Ovary (tissue), 10 donors: ENCODE measurements at regions of chr15 and their contacts with region 1.

Region 1: GRCh38 chr15:50463423-50464358 is 39.5 kb downstream of the USP8 start:
- DNase-seq: no peak
- H3K4me3 ChIP-seq: no peak overlapping the region
- H3K27ac ChIP-seq: no peak overlapping the region
- H3K4me1 ChIP-seq: no peaks in the 10 kb centered on the region
- H3K27me3 ChIP-seq: no peaks in the 10 kb centered on the region
- CTCF ChIP-seq: no peak
- EP300 ChIP-seq: no peak
- POLR2A ChIP-seq: no peak

Region 2: DNA sequence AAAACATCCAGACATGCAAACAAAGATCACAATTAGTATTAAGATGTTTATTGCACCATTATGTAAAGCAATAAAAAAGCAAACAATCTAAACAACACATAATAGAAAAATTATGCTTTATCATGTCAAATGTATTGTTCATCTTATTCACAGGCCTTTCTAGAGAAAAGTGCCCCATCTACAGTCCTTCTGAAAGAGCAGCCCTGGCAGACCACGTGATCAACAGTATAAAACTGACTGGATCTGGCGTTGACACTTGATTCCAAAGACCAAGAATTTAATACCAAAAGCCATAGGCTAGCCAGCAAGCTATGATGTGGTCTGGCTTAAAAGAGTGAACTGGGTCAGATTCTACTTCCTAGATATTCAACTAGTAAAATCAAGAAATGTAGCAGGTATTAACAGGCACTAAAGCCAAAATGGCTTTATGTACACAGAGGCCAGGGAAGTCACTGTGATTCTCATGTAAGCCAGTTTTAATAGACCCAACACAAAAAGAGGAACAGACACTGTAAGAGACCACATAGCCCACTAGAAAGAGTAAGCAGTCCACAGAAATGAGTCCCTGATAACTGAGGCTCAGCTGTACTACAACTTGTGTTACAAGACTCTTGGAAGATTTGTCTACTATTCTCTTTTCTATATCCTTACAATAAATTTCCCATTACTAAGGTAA is 1126.3 kb after region 1 on chr15:
- intact Hi-C with region 1: loop called in 1 of 4 experiments (anchors 10 kb)
- DNase-seq: no peak
- H3K4me3 ChIP-seq: no peak overlapping the region
- H3K27ac ChIP-seq: no peak overlapping the region
- H3K4me1 ChIP-seq: no peaks in the 10 kb centered on the region
- H3K27me3 ChIP-seq: no peaks in the 10 kb centered on the region
- CTCF ChIP-seq: no peak
- EP300 ChIP-seq: no peak
- POLR2A ChIP-seq: no peak